ENCODE measurements at regions of chr15 and their contacts with region 1.

Region 1: DNA sequence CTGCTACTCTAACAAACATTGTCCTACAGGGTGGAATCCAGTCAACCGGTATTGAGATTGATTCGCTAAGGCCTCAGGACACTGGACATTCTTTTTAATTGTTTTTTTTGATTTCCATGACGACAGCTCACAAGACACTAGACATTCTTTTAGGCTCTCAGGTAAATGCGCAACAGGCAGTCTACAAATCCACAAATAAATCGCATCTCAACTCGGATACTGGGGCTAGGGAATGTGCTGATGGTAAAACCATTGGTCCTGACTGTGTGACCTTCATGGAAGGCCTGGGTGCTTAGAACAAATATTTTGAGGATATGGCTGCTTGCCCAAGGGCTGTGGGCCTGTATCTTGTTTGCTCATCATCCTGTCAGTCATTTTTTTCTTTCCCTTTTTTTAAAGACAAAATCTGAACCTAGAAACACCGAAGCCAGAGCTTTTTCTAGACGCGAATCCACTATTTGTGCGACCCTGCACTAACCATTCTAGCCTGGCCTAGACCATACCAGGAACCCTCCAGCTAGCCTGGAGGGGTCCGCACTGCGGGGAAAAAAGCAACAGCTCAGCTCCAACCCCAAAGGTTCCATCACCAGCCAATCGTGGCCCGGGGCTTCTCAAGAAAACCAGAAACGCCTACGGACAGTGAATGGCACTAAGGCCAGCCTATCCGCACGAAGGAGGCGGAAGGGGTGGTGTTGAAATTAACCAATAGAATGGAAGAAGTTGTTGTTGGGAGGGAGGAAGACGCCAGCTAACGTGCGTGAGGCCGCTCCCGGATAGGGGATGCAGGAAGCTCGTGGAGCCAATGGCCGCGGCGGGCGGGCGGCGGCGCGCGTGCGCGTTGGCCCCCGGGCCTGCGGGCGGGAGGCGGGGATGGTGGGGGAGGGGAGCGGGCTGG is 18.1 kb upstream of the CHD2 start:
- DNase-seq: peak; percentile 96 to 99
- ATAC-seq: peak; percentile 78

Region 2: GRCh38 chr15:92391640-92392039 is 490.4 kb before region 1 on chr15:
- intact Hi-C with region 1: no loop called
- DNase-seq: no peak
- ATAC-seq: peak; percentile 54

Region 3: GRCh38 chr15:92808978-92809879 is 72.8 kb before region 1 on chr15:
- intact Hi-C with region 1: loop called in 1 of 2 experiments (anchors 5 kb)
- DNase-seq: peak; percentile 98
- ATAC-seq: peak; percentile 77

Region 4: DNA sequence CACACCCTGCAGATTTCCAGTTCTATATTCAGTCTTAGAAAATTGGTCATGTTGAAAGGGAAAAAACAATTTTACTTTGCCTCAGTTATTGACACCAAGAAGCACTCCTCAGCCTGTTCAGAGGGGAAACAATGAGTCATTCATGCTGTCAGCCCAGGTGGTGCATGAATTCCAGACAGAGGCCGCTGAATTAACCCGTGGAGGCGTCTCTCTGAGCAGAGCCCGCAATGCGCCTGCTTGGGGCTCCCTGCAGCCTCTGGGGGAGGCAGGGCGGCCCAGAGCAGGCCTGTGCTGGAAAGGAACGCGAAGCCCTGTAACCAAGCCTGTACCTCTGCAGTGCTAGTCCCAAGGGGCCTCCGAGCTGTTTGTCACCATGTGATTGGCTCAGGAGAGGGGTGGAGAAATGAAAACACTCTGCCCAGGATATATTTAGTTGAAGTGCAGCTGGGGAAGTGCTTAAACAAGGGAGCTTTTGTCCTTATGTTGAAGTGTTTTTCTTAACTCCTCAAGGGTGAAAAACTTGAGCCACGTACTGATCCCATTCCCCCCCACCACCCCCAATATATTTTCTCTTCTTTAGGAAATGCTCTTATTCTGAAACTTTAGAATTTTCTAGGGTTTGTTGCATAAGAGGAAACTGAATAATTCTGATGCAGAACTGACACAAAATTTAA is 50.3 kb before region 1 on chr15:
- intact Hi-C with region 1: loop called in 1 of 2 experiments (anchors 5 kb)
- DNase-seq: peak; percentile 85 to 92
- ATAC-seq: peak; percentile 96